ENCODE measurements at regions of chr22 and their contacts with region 1.

Region 1: DNA sequence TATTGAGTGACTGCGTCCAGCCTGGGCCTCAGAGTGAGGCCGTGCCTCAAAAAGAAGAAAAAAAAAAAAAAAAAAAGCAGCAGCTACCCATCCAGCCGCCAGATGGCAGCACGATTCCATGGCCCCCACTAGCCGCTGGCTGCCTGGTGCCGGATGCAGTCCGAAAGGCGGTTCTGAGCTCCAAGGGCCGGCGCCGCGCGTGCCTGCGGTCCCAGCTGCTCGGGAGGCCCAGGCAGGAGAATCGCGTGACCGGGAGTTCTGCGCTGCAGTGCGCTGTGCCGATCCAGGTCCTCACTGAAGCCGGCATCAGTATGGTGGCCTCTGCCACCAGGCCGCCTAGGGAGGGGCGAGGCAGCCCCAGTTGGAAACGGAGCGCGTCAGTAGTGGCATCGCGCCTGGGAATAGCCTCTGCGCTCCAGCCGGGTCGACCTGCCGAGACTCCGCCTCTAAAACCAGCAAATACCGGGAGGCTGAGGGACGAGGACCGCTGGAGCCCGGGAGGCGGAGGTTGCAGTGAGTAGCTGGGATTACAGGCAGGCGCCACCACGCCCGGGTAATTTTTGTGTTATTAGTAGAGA is 19.3 kb downstream of the SCARF2 start:
- DNase-seq: peak; percentile 82
- ATAC-seq: peak; percentile 71
- H3K4me3 Mint-ChIP-seq: no peak overlapping the region
- H3K27ac Mint-ChIP-seq: no peak overlapping the region
- H3K4me1 Mint-ChIP-seq: no peaks in the 10 kb centered on the region
- H3K27me3 Mint-ChIP-seq: no peaks in the 10 kb centered on the region

Region 2: GRCh38 chr22:20430720-20431510 is 12.6 kb after region 1 on chr22:
- CTCF ChIA-PET with region 1: interaction called, 17 read pairs
- POLR2A ChIA-PET with region 1: no interaction called
- intact Hi-C with region 1: no loop called
- DNase-seq: peak; percentile 79
- ATAC-seq: peak; percentile 57
- H3K4me3 Mint-ChIP-seq: peak overlapping the region; percentile 45
- H3K27ac Mint-ChIP-seq: no peak overlapping the region
- H3K4me1 Mint-ChIP-seq: peaks cover 12% of the 10 kb centered on the region
- H3K27me3 Mint-ChIP-seq: peaks cover 51% of the 10 kb centered on the region

Region 3: GRCh38 chr22:20456064-20456721 is 37.9 kb after region 1 on chr22:
- CTCF ChIA-PET with region 1: interaction called, 44 read pairs
- POLR2A ChIA-PET with region 1: no interaction called
- intact Hi-C with region 1: loop called (anchors 1 kb)
- DNase-seq: peak; percentile 88
- ATAC-seq: peak; percentile 95
- H3K4me3 Mint-ChIP-seq: no peak overlapping the region
- H3K27ac Mint-ChIP-seq: peak overlapping the region; percentile 59
- H3K4me1 Mint-ChIP-seq: peaks cover 20% of the 10 kb centered on the region
- H3K27me3 Mint-ChIP-seq: no peaks in the 10 kb centered on the region

Region 4: GRCh38 chr22:20463324-20464095 is 45.2 kb after region 1 on chr22:
- CTCF ChIA-PET with region 1: interaction called, 14 read pairs
- POLR2A ChIA-PET with region 1: no interaction called
- intact Hi-C with region 1: no loop called
- DNase-seq: no peak
- ATAC-seq: peak; percentile 31
- H3K4me3 Mint-ChIP-seq: no peak overlapping the region
- H3K27ac Mint-ChIP-seq: peak overlapping the region; percentile 94
- H3K4me1 Mint-ChIP-seq: peaks cover 53% of the 10 kb centered on the region
- H3K27me3 Mint-ChIP-seq: no peaks in the 10 kb centered on the region

Region 5: GRCh38 chr22:20568989-20569769 is 150.9 kb after region 1 on chr22:
- CTCF ChIA-PET with region 1: interaction called, 9 read pairs
- POLR2A ChIA-PET with region 1: no interaction called
- intact Hi-C with region 1: loop called (anchors 2 to 10 kb)
- DNase-seq: peak; percentile 79
- ATAC-seq: peak; percentile 62
- H3K4me3 Mint-ChIP-seq: no peak overlapping the region
- H3K27ac Mint-ChIP-seq: peak overlapping the region; percentile 69
- H3K4me1 Mint-ChIP-seq: peaks cover 75% of the 10 kb centered on the region
- H3K27me3 Mint-ChIP-seq: no peaks in the 10 kb centered on the region

Region 6: DNA sequence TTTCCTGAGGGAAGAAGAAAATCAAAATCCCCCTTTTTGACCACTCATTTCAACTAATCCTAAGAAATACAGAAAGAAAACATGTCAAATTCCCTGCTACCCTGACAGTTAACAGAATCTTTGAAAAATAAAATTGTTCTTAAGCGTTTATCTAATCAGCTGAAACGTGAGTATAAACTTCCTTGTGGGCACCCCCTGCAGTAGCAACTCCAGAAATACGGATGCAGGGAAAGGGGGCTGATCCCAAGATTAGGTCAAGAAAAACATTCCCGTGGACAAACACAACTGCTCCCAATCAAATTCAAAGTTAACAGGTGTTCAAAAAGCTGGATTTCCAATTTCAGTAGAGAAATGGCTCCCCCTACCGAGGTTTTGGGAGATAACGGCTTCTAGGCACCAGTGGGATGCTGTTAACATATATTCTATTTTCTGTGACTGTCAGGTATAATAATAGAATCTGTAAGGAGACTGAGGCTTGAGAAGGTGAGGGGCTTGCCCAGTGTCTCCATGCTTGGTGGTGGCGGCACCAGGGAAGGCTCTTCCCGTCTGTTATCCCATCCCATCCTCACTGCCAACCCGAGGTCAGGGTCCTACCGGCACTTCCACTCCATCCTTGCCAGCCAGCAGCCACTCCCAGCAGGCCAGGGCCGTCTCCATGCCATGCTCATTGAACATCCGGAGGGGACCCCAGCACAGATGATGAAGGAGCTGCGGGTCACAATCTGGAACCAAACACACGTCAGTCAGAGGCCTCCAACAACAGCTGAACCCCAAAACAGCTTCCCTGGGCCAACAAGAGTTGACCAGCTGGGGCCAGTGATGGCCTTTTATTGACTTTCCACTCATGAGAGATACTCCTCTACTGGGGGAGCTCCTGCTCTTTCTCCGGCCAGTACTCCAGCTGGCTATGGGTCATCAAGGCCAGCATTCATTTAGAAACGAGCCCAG is 323.6 kb after region 1 on chr22:
- CTCF ChIA-PET with region 1: interaction called, 3 read pairs
- POLR2A ChIA-PET with region 1: no interaction called
- intact Hi-C with region 1: loop called (anchors 1 to 5 kb)
- DNase-seq: peak; percentile 60
- ATAC-seq: no peak
- H3K4me3 Mint-ChIP-seq: no peak overlapping the region
- H3K27ac Mint-ChIP-seq: no peak overlapping the region
- H3K4me1 Mint-ChIP-seq: no peaks in the 10 kb centered on the region
- H3K27me3 Mint-ChIP-seq: no peaks in the 10 kb centered on the region

Measured in activated CD4-positive, alpha-beta T cell treated with anti-CD3 and anti-CD28 coated beads for 36 hours (primary cell).